ENCODE measurements at regions of chr1 and their contacts with region 1.

Region 1: GRCh38 chr1:155801149-155801548 is 55.9 kb downstream of the GON4L start:
- DNase-seq: no peak
- H3K4me3 ChIP-seq: no peak overlapping the region
- CTCF ChIP-seq: no peak

Region 2: GRCh38 chr1:155681776-155682175 is 119.4 kb before region 1 on chr1:
- in situ Hi-C with region 1: no loop called
- DNase-seq: no peak
- H3K4me3 ChIP-seq: no peak overlapping the region
- CTCF ChIP-seq: no peak

Region 3: DNA sequence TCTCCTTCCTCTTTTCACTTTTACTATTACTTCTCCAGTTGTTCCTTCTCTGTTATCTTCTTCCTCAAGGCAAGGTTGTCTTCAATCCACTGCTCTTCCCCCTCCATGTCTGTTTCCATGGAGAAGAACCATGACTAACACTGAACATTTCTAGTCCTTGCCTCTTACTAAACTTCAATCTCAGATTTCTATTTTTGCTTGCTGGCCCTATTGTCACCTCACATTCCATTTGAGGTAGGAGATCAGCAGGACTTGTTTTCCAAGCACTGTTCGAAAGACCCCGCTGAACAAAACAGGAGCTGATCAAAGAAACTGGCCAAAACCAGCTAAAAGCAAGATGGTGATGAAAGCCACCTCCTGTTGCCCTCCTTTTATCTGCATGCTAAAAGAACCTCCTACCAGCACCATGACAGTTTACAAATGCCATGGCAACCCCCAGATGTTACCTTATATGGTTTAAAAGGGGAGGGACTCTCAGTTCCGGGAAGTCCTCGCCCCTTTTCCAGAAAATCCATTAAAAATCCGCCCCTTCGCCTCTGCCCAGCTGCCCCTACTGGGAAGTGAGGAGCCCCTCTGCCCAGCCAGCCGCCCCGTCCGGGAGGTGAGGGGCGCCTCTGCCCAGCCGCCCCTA is 33.3 kb after region 1 on chr1:
- in situ Hi-C with region 1: no loop called
- DNase-seq: peak; percentile 87
- H3K4me3 ChIP-seq: peak overlapping the region; percentile 2
- CTCF ChIP-seq: no peak

Region 4: DNA sequence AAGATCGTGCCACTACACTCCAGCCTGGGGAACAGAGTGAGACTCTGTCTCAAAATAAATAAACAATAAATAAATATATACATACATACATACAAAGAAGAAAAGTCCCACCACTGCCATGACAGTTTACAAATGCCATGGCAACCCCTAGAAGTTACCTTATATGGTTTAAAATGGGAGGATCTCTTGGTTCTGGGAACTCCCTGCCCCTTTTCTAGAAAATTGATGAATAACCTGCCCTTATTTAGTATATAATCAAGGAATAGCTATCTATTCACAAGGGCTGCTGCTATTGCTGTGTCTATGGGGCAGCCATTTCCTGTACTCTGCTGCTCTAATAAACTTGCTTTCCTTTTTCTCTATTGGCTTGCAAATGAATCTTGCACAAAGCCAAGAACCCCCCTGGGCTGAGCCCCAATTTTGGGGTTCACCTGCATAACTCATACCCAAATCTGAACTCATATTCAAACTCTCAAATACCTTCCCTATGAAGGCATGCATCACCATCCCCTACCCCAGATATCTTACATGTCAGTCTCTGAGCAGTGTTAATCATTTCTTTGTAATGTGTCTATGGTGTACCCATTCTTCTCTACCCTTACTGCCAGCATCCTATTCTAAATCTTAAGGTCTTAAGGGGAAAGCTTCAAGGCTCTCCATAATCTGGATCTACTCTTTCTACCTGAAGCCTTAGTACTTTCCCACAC is 46.8 kb after region 1 on chr1:
- in situ Hi-C with region 1: loop called (anchors 5 kb)
- DNase-seq: no peak
- H3K4me3 ChIP-seq: no peak overlapping the region
- CTCF ChIP-seq: no peak

Region 5: DNA sequence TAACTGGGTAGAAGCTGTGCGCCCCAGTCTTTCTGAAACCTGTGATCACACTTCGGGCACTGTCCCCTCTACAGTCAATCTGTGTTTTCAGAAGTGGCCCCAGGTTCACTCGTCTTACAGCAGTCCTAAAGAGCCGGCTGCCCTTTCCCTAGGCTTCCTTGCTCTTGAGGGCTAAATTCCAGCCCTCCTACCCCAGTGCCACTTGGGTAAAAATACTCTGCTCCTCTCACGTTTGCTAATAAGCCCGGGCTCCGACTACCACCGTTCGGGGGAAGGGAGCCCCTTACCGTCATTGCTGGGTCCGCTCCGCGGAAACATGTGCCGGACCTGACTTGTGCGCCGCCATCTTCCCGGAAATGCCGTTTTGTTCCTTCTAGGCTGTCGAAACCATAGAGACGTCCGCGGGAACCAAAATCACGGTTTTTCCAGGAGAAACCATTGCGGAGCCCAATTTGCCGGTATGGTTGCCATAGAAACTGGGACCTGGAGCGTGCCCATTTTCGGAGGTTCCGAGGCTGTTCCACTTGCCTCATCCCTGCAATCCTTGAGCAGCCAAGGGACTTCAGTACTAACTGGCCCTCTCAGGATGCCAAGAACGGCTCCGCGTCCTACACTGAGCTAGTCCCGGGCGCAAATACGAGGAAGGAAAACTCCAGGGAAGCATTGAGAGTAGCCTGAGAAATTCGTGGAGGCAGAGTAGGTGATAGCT is 800.1 kb after region 1 on chr1 and contains the start of gene GPATCH4:
- in situ Hi-C with region 1: no loop called
- DNase-seq: peak; percentile 82
- H3K4me3 ChIP-seq: peak within 1 kb of the TSS; percentile 79
- CTCF ChIP-seq: no peak

Measured in astrocyte of the cerebellum (primary cell).